Pancreas (tissue), 10 donors: ENCODE measurements at regions of chr20 and their contacts with region 1.

Region 1: DNA sequence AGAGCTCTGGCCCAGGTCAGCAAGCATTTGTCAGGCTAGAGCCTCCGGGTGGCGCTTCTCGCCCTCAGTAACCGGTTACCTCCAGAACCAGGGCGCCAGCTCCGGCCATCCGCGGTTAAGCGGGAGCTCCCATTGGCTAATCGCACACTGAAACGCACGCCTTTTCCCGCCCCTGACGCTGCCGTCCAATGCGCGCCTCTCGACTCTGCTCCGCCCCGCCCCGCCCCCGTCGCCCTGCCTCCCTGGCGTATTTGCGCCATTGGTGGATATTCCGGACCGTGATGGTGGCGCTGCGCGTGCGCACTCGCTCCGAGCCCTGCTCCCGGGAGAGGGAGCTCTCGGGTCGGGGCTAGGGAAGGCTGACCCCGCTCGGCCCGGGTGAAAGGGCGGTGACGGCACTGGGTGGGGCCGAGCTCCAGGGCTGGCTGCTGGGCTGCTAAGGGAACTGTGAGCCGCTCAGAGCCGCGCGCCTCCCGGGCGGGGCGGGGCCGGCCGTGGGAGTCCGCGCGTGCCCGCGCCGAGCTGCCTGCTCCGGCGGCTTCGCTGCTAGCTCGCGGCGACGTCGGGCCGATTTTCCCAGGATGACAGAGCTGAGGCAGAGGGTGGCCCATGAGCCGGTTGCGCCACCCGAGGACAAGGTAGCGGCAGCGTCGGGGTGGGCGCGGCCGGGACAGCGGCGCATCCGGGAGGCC is at the start of gene CDS2:
- DNase-seq: peak; percentile 100
- ATAC-seq: peak; percentile 92 to 96 (median 92)
- H3K4me3 ChIP-seq: peak within 1 kb of the TSS; percentile 84 to 93 (median 92)
- H3K27ac ChIP-seq: peak within 1 kb of the TSS; percentile 93 to 95 (median 93)
- H3K4me1 ChIP-seq: peaks cover 0 to 6% (median 2%) of the 10 kb centered on the region in 3 donors
- H3K27me3 ChIP-seq: no peaks in the 10 kb centered on the region
- CTCF ChIP-seq: peak in 3 of 4 donors; percentile 27 to 50 (median 30)
- total RNA-seq, gene CDS2: 12.7 to 27.1 (median 15.8) TPM

Region 2: GRCh38 chr20:4341804-4342485 is 784.7 kb before region 1 on chr20:
- intact Hi-C with region 1: no loop called
- DNase-seq: no peak
- ATAC-seq: no peak
- H3K4me3 ChIP-seq: no peak overlapping the region
- H3K27ac ChIP-seq: no peak overlapping the region
- H3K4me1 ChIP-seq: no peaks in the 10 kb centered on the region
- H3K27me3 ChIP-seq: no peaks in the 10 kb centered on the region
- CTCF ChIP-seq: no peak

Region 3: DNA sequence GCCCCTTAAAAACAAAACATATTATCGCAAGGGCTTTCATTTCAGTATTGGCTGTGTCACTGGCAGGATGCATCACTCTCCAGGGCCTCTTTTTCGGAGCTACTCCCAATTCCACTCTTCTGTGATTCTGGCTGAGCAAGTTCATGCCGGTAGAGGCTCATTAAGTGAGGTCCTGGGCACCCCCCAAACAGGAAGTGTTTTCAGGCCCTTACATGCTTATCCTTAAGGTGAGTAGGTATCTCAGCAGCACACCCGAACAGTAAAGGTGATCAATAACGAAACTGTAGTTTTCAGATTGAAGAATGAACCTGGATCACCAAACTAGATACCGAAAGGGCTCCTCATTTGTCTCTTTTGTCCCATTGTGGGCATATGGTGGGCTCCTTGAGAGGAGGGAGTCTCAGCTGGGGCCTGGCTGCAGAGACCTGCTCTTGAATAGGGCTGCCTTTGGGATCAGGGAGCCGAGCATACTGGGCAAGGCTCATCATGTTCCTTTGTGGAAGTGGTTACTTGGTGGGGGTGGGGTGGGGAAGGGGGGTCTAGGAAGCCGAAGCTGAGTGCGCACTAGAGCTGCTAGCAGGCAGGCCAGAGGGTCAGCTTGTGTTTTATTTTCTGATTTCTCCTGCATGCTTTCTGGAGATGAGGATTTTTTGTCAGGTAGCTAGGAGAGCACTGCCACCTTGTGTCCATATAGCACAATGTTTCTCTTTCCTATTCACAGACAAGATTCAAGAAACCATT is 65.3 kb after region 1 on chr20:
- intact Hi-C with region 1: loop called in 1 of 3 experiments (anchors 5 kb)
- DNase-seq: peak in 1 of 6 donors; percentile 52
- ATAC-seq: peak; percentile 74 to 95 (median 94)
- H3K4me3 ChIP-seq: no peak overlapping the region
- H3K27ac ChIP-seq: no peak overlapping the region
- H3K4me1 ChIP-seq: no peaks in the 10 kb centered on the region
- H3K27me3 ChIP-seq: no peaks in the 10 kb centered on the region
- CTCF ChIP-seq: peak; percentile 33 to 69 (median 63)